Mammary epithelial cell (primary cell): ENCODE measurements at regions of chr10 and their contacts with region 1.

Region 1: DNA sequence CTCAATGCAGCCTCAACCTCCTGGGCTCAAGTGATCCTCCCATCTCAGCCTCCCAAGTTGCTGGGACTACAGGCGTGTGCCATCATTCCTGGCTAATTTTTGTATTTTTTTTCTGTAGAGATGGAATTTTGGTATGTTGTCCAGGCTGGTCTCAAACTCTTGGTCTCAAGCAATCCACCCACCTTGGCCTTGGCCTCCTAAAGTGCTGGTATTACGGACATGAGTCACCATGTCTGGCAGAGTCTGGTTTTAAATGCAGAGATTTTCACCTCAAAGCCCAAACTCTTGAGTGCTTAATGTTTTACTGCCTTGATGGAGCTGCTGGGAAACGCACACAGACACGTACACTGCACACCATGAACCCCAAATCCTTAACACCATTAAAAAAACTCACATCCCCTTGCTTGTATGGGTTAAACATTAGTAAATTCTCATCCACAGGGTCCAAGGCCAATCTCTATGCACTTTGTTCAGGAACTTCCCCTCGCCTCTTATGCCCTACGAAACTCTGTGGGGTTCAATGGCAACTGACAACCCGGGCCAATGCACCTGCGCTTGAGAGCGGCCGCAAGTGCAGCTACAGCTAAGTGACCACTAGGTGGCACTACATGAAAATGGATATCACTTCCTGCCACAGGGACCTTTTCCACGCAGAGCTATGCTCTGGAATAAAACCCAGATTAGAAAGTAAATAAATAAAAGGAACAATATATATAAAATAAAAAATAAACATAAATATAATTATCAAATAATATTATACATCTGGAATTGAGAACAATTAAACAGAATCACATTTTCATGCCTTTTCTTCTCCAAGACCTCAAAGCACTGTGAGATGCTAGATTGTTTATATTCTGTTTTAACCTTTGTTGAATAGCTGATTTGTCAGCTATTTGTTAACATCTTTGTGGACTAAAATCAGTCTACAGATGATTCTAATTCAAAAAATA is 66.9 kb upstream of the AFAP1L2 start:
- DNase-seq: peak; percentile 50
- H3K4me3 ChIP-seq: no peak overlapping the region
- H3K27ac ChIP-seq: no peak overlapping the region
- H3K4me1 ChIP-seq: no peaks in the 10 kb centered on the region
- H3K27me3 ChIP-seq: no peaks in the 10 kb centered on the region
- CTCF ChIP-seq: peak; percentile 86 to 89

Region 2: DNA sequence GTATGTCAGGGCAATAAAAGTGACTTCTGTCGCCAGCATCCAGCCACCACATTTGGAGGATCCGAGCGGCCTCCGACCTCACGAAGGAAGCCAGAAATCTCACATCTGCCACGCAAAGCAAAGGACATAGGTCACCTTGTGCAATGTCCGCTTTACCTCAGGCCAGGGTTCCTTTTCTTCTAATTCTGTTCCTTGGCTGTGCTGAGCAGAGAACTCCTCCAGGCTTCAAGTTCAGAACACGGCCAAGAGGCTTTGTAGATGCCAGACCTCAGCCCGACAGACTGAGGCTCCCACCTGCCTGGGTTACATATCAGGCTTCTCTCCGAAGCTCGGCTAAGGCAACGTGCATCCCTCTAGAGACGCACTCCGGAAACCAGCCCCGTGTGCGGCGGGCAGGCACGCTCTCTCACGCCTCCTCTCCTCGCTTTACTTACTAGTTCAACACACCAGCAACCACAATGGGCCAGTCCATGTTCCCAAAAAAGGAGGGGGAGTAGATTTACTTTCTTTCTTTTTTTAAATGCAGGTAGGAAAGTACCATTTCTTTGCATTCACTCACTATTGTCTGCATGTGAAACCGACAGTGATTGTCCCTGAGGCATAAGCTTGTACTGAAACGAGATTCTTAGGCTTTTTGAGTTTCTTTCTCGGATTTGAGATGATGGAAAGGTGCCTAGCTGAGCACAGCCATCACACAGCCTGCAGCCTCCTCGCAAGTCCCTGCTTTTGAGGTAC is 55.4 kb after region 1 on chr10:
- CTCF ChIA-PET with region 1: interaction called, 18 read pairs
- dilution Hi-C with region 1: no loop called
- in situ Hi-C with region 1: no loop called
- intact Hi-C with region 1: loop called (anchors 1 kb)
- DNase-seq: peak; percentile 91
- H3K4me3 ChIP-seq: peak overlapping the region; percentile 61 to 88 (median 64)
- H3K27ac ChIP-seq: peak overlapping the region; percentile 96
- H3K4me1 ChIP-seq: peaks cover 15% of the 10 kb centered on the region
- H3K27me3 ChIP-seq: no peaks in the 10 kb centered on the region
- CTCF ChIP-seq: no peak

Region 3: GRCh38 chr10:114541081-114541796 is 70.0 kb after region 1 on chr10:
- CTCF ChIA-PET with region 1: interaction called, 5 read pairs
- dilution Hi-C with region 1: no loop called
- in situ Hi-C with region 1: loop called (anchors 5 kb)
- intact Hi-C with region 1: loop called (anchors 1 kb)
- DNase-seq: peak; percentile 89
- H3K4me3 ChIP-seq: no peak overlapping the region
- H3K27ac ChIP-seq: peak overlapping the region; percentile 47
- H3K4me1 ChIP-seq: peaks cover 41% of the 10 kb centered on the region
- H3K27me3 ChIP-seq: no peaks in the 10 kb centered on the region
- CTCF ChIP-seq: no peak

Region 4: GRCh38 chr10:114694752-114695151 is 223.5 kb after region 1 on chr10:
- CTCF ChIA-PET with region 1: no interaction called
- dilution Hi-C with region 1: no loop called
- in situ Hi-C with region 1: no loop called
- intact Hi-C with region 1: loop called (anchors 2 kb)
- DNase-seq: no peak
- H3K4me3 ChIP-seq: no peak overlapping the region
- H3K27ac ChIP-seq: no peak overlapping the region
- H3K4me1 ChIP-seq: peaks cover 25% of the 10 kb centered on the region
- H3K27me3 ChIP-seq: no peaks in the 10 kb centered on the region
- CTCF ChIP-seq: peak; percentile 52 to 66

Region 5: DNA sequence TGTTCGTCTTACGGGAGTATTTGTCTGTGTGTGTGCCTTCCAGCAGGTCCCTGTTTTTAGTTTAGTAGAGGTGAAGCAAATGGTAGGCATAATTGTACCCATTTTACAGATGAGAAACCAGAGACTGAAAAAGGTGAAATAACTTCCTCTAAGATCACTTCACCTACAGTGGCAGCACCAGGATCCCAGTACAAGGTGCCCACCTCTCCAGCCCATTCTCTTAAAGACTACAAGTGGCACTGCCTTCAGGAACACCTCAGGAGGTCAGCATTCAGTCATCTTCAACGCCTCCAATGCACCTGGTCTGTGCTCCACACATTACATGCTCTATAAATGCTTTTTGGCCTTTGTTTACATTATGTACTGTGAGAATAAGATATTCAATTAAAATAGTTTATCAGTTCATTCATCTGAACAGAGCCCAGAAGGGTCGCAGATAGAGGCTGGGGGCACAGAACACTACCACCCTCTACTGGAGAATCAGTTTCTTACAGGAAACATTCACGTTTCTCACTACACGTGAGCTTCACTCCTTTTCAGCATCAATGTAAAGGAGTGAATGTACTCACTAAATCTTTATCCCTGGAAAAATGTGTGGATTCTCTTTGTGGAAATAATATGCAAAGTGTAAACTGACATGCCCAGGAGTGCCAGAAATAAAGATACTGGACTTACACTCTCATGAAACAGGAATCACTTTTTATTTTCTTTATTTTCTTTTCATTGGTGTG is 232.3 kb after region 1 on chr10:
- CTCF ChIA-PET with region 1: interaction called, 3 read pairs
- dilution Hi-C with region 1: no loop called
- in situ Hi-C with region 1: no loop called
- intact Hi-C with region 1: loop called (anchors 2 kb)
- DNase-seq: no peak
- H3K4me3 ChIP-seq: no peak overlapping the region
- H3K27ac ChIP-seq: no peak overlapping the region
- H3K4me1 ChIP-seq: peaks cover 4% of the 10 kb centered on the region
- H3K27me3 ChIP-seq: no peaks in the 10 kb centered on the region
- CTCF ChIP-seq: peak; percentile 59 to 83

Region 6: GRCh38 chr10:114779803-114780609 is 308.8 kb after region 1 on chr10:
- CTCF ChIA-PET with region 1: no interaction called
- dilution Hi-C with region 1: no loop called
- in situ Hi-C with region 1: loop called in 1 of 2 experiments (anchors 25 kb)
- intact Hi-C with region 1: no loop called
- DNase-seq: peak; percentile 83
- H3K4me3 ChIP-seq: no peak overlapping the region
- H3K27ac ChIP-seq: peak overlapping the region; percentile 75
- H3K4me1 ChIP-seq: peaks cover 24% of the 10 kb centered on the region
- H3K27me3 ChIP-seq: no peaks in the 10 kb centered on the region
- CTCF ChIP-seq: no peak

Region 7: GRCh38 chr10:115129752-115130151 is 658.5 kb after region 1 on chr10:
- CTCF ChIA-PET with region 1: no interaction called
- dilution Hi-C with region 1: no loop called
- in situ Hi-C with region 1: no loop called
- intact Hi-C with region 1: loop called (anchors 5 kb)
- DNase-seq: peak; percentile 4
- H3K4me3 ChIP-seq: no peak overlapping the region
- H3K27ac ChIP-seq: no peak overlapping the region
- H3K4me1 ChIP-seq: no peaks in the 10 kb centered on the region
- H3K27me3 ChIP-seq: no peaks in the 10 kb centered on the region
- CTCF ChIP-seq: peak in 1 of 2 donors; percentile 11